ENCODE measurements at regions of chr2 and their contacts with region 1.

Region 1: DNA sequence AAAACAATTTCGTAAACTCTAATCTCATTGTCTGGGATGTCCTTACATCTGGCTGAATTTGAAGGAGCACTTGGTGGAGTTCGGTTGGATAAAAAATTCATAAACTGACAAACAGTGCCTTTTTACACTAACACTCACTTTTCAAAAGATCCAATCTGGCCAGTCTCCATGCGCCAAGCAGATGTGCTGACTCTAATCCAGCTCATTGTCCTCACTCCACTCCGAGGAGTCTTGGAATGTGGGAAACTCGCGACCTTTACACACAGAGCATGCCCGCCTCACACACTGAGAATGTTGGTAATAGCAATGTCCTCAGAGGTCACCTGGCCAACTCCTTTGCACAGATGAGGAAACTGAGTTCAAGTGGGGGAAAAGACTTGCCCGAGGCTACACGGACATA is 66.8 kb downstream of the XDH start:
- DNase-seq: no peak

Region 2: DNA sequence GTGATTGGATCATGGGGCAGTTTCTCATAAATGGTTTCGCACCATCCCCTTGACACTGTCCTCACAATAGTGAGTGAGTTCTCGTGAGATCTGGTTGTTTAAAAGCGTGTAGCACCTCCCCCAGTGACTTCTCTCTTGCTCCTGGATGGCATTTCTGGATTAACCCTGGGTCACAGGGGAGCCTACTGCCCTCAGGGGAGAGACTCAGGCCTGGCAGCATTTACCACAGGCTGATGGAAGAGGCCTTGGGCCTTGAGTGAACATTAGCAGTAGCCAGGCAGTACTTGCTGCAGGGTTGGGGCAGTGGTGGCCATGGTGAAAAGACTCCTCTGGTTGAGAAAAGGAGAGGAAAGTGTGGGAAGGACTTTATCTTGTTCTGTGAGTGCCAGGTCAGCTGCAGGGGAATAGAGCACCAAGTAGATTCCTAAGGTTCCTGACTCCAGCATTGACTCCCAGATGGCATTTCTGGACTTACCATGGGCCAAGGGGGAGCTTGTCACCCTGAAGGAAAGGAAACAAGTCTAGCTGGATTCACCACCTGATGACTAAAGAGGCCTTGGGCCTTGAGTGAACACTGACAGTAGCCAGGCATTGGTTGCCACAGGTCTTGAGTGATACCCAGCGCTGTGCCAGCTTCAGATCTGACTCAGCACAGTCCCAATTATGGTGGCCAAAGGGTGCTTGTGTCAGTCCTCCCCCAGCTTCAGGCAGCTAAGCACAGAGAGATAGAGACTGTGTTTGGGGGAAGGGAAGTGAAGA is 500.6 kb before region 1 on chr2:
- intact Hi-C with region 1: loop called in 1 of 2 experiments (anchors 5 kb)
- DNase-seq: no peak

Region 3: GRCh38 chr2:31302940-31303563 is 44.7 kb before region 1 on chr2:
- intact Hi-C with region 1: no loop called
- DNase-seq: no peak